Dendritic cell treated with granulocyte-macrophage colony-stimulating factor and Interleukin-4, amounts not matched to agents 40 ng/mL and 50 ng/mL, for 4 days (primary cell): ENCODE measurements at regions of chr9 and their contacts with region 1.

Region 1: GRCh38 chr9:35882263-35882848 is 12.2 kb upstream of the OR13J1 start:
- H3K4me3 Mint-ChIP-seq: no peak overlapping the region
- H3K27ac Mint-ChIP-seq: no peak overlapping the region
- H3K4me1 Mint-ChIP-seq: no peaks in the 10 kb centered on the region
- H3K27me3 Mint-ChIP-seq: peaks cover 34% of the 10 kb centered on the region

Region 2: DNA sequence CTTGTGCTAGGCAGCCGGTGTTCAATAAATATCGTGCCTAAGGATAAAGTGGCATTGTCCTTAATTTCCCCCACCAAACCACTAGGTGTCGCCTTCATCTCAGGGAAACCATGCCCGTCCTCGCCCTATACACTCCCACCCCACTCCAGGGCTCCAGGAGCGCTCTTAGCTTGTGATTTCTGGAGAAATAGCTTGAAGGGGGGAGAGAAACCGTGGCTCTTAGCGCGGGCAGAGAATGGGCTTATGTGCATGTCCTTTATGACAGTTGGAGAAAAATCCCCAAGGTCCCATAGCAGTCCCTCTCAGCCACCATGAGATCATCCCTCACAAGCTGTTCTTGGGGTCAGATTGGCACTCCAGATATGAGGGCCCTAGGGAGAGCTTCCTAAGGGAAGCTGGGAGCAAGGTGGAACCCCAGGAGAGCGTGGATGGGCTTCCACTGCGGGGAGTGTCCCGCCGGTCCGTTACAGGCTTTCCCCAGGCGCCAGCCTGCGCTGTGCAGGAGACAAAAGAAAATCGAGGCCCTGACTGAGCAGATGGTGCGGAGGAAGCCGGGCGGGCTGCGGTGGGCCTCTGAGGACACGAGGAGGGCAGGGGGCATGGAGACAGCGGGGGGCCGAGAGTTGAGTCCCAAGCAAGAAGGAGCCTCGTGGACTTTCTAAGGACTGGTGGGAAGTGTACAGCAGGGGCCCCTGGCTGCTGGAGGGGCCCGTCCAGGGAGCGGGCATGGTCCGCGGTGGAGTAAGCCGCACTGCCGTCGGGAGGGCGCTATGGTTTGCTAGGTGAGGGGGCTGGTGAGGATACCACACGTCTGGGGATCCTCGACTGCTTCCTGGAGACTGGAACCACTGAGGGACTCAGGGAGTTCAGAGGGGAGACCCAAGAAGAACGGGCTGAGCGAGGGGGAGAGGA is 91.7 kb before region 1 on chr9:
- intact Hi-C with region 1: loop called (anchors 1 kb)
- H3K4me3 Mint-ChIP-seq: peak overlapping the region; percentile 70
- H3K27ac Mint-ChIP-seq: peak overlapping the region; percentile 18
- H3K4me1 Mint-ChIP-seq: peaks cover 25% of the 10 kb centered on the region
- H3K27me3 Mint-ChIP-seq: peaks cover 25% of the 10 kb centered on the region

Region 3: GRCh38 chr9:35829084-35829763 is 53.1 kb before region 1 on chr9 and contains the start of gene TMEM8B:
- intact Hi-C with region 1: loop called (anchors 1 kb)
- H3K4me3 Mint-ChIP-seq: peak within 1 kb of the TSS; percentile 87
- H3K27ac Mint-ChIP-seq: peak within 1 kb of the TSS; percentile 67
- H3K4me1 Mint-ChIP-seq: peaks cover 73% of the 10 kb centered on the region
- H3K27me3 Mint-ChIP-seq: peaks cover 54% of the 10 kb centered on the region

Region 4: GRCh38 chr9:35835216-35835632 is 47.1 kb before region 1 on chr9:
- intact Hi-C with region 1: loop called (anchors 5 kb)
- H3K4me3 Mint-ChIP-seq: no peak overlapping the region
- H3K27ac Mint-ChIP-seq: no peak overlapping the region
- H3K4me1 Mint-ChIP-seq: peaks cover 94% of the 10 kb centered on the region
- H3K27me3 Mint-ChIP-seq: peaks cover 79% of the 10 kb centered on the region

Region 5: DNA sequence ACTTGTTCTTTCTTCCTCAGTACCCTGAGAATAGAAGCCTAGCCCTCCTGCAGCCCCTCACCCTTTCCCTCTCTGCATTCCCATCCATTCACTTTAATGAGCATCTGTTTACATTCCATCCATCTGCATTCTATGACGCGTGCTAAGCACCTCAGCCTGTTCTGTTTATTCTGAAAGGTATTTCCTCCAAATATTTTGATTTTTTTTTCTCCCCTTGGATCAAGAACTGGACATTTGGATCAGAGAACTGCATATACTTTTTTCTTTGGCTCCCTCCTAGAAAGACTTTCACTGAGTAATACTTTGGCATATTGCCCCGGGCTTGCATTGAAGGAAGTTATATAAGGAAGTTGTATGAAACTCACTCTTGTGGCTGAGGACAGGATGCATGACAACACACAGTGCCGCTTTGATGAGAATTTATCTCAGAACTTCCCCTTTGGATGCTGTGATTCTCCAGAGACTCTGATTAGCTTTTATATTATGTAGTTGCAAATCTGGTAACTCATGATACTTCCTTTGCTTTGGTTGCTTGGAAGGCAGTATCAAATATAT is 37.6 kb before region 1 on chr9:
- intact Hi-C with region 1: loop called (anchors 5 kb)
- H3K4me3 Mint-ChIP-seq: no peak overlapping the region
- H3K27ac Mint-ChIP-seq: peak overlapping the region; percentile 76
- H3K4me1 Mint-ChIP-seq: peaks cover 79% of the 10 kb centered on the region
- H3K27me3 Mint-ChIP-seq: peaks cover 82% of the 10 kb centered on the region